ENCODE measurements at regions of chr10 and their contacts with region 1.

Region 1: DNA sequence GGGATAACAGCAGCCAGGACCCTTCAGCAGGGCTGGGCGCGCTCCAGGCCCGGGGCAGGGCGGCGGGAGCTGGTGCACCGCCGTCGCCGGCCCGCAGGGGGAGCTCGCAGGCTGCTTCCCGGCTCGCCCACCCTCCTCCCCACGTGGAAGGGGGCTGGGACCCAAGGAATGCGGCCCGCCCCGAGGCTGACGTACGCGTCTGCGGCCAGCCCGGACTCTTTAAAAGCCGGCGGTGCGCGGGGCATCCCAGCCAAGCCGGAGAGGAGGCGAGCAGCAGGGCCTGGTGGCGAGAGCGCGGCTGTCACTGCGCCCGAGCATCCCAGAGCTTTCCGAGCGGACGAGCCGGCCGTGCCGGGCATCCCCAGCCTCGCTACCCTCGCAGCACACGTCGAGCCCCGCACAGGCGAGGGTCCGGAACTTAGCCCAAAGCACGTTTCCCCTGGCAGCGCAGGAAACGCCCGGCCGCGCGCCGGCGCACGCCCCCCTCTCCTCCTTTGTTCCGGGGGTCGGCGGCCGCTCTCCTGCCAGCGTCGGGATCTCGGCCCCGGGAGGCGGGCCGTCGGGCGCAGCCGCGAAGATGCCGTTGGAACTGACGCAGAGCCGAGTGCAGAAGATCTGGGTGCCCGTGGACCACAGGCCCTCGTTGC is at the start of gene PFKFB3:
- DNase-seq: peak; percentile 94
- H3K4me3 Mint-ChIP-seq: peak within 1 kb of the TSS; percentile 94
- H3K27ac Mint-ChIP-seq: peak within 1 kb of the TSS; percentile 95
- H3K4me1 Mint-ChIP-seq: peaks cover 41% of the 10 kb centered on the region
- H3K27me3 Mint-ChIP-seq: peaks cover 3% of the 10 kb centered on the region

Region 2: GRCh38 chr10:6062101-6062771 is 140.6 kb before region 1 on chr10 and contains the start of gene IL2RA:
- CTCF ChIA-PET with region 1: no interaction called
- DNase-seq: peak; percentile 75
- H3K4me3 Mint-ChIP-seq: peak within 1 kb of the TSS; percentile 81
- H3K27ac Mint-ChIP-seq: peak within 1 kb of the TSS; percentile 95
- H3K4me1 Mint-ChIP-seq: peaks cover 74% of the 10 kb centered on the region
- H3K27me3 Mint-ChIP-seq: no peaks in the 10 kb centered on the region

Region 3: GRCh38 chr10:6136215-6137201 is 66.3 kb before region 1 on chr10:
- CTCF ChIA-PET with region 1: interaction called, 10 read pairs
- DNase-seq: peak; percentile 47
- H3K4me3 Mint-ChIP-seq: no peak overlapping the region
- H3K27ac Mint-ChIP-seq: peak overlapping the region; percentile 68
- H3K4me1 Mint-ChIP-seq: peaks cover 57% of the 10 kb centered on the region
- H3K27me3 Mint-ChIP-seq: peaks cover 51% of the 10 kb centered on the region

Region 4: GRCh38 chr10:6171881-6172695 is 30.7 kb before region 1 on chr10:
- CTCF ChIA-PET with region 1: interaction called, 29 read pairs
- DNase-seq: no peak
- H3K4me3 Mint-ChIP-seq: no peak overlapping the region
- H3K27ac Mint-ChIP-seq: no peak overlapping the region
- H3K4me1 Mint-ChIP-seq: peaks cover 84% of the 10 kb centered on the region
- H3K27me3 Mint-ChIP-seq: no peaks in the 10 kb centered on the region

Region 5: GRCh38 chr10:6228010-6228511 is 25.3 kb after region 1 on chr10:
- CTCF ChIA-PET with region 1: no interaction called
- DNase-seq: no peak
- H3K4me3 Mint-ChIP-seq: no peak overlapping the region
- H3K27ac Mint-ChIP-seq: peak overlapping the region; percentile 62
- H3K4me1 Mint-ChIP-seq: peaks cover 17% of the 10 kb centered on the region
- H3K27me3 Mint-ChIP-seq: no peaks in the 10 kb centered on the region

Region 6: GRCh38 chr10:6314620-6315205 is 111.9 kb after region 1 on chr10:
- CTCF ChIA-PET with region 1: no interaction called
- DNase-seq: no peak
- H3K4me3 Mint-ChIP-seq: no peak overlapping the region
- H3K27ac Mint-ChIP-seq: no peak overlapping the region
- H3K4me1 Mint-ChIP-seq: peaks cover 4% of the 10 kb centered on the region
- H3K27me3 Mint-ChIP-seq: peaks cover 8% of the 10 kb centered on the region

Region 7: DNA sequence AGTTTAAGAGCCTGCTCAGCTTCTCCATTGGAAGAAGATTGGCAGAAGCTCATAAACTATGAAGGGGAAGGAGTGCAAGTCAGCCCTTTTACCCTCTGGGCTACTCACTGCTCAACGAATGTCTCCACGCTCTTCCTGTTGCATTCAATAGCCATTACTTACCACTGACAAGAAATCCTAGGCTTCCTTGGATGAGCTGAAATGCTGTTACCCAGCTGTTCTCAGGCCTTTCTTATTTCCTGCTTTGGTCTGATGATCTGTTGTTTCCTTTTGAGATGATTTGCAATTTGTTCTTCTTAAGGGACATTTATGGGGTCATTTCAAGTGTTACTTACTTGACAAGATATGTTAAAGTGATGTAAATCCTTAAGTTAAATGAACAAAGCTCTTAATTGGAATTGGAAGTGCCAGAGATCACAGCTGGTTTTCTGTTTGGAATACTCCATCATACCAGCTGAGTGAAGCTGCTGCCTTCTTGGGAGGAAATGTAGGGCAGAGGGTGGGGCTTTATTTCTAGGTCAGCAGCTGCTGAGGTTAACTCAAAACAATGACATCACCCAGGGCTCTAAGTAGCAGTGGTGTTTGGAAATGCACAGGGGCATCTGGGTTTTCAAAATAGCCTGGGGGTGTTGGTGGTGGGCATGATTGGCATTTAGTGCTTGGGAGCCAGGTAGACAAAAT is 207.3 kb after region 1 on chr10:
- CTCF ChIA-PET with region 1: interaction called, 43 read pairs
- DNase-seq: peak; percentile 64
- H3K4me3 Mint-ChIP-seq: peak overlapping the region; percentile 16
- H3K27ac Mint-ChIP-seq: peak overlapping the region; percentile 86
- H3K4me1 Mint-ChIP-seq: peaks cover 51% of the 10 kb centered on the region
- H3K27me3 Mint-ChIP-seq: peaks cover 3% of the 10 kb centered on the region